ENCODE measurements at regions of chr12 and their contacts with region 1.

Region 1: DNA sequence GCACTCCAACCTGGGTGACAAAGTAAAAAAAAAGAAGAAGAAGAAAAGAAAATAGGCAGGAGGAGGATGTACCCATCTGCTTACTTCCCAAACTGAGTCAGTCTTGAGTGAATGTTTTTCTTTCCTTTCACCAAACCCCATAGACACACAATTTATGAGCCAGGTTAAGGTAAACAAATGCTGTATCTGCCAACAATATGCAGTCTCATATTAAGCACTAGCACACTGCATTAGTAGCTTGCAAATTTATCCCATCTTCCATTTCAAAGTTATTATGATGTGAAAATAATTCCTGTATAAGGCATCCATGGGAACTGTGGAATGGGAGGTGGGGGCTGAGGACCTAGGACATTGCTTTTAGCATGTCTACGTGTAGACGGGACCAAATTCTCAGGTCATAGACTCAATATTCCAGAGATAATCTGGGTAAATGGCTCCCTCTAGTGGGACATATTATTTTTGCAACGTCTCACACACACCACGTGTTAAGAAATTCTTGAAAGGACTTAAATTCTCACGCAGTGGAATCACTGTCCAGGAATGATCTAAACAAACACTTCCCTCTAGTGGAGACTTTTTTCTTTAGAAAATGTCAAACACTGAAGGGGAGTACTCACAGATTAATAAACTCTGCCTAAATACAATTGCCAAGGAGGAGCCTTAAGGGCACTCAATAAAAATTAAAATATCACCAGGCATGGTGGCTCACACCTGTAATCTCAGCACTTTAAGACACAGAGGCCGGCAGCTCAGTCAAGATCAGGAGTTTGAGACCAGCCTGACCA is 17.1 kb upstream of the OR10P1 start:
- DNase-seq: peak; percentile 90
- H3K4me3 Mint-ChIP-seq: no peak overlapping the region
- H3K27ac Mint-ChIP-seq: no peak overlapping the region
- H3K4me1 Mint-ChIP-seq: no peaks in the 10 kb centered on the region
- H3K27me3 Mint-ChIP-seq: peaks cover 38% of the 10 kb centered on the region

Region 2: GRCh38 chr12:54749191-54749818 is 870.2 kb before region 1 on chr12:
- intact Hi-C with region 1: no loop called
- DNase-seq: peak; percentile 84
- H3K4me3 Mint-ChIP-seq: peak overlapping the region; percentile 41
- H3K27ac Mint-ChIP-seq: no peak overlapping the region
- H3K4me1 Mint-ChIP-seq: peaks cover 16% of the 10 kb centered on the region
- H3K27me3 Mint-ChIP-seq: peaks cover 20% of the 10 kb centered on the region

Region 3: GRCh38 chr12:54853995-54854566 is 765.5 kb before region 1 on chr12 and contains the start of gene MUCL1:
- intact Hi-C with region 1: loop called (anchors 10 kb)
- DNase-seq: peak; percentile 93
- H3K4me3 Mint-ChIP-seq: no peak within 1 kb of the TSS
- H3K27ac Mint-ChIP-seq: no peak within 1 kb of the TSS
- H3K4me1 Mint-ChIP-seq: peaks cover 20% of the 10 kb centered on the region
- H3K27me3 Mint-ChIP-seq: peaks cover 5% of the 10 kb centered on the region
- total RNA-seq, gene MUCL1: 0.54 and 0.84 TPM in 2 replicates

Region 4: DNA sequence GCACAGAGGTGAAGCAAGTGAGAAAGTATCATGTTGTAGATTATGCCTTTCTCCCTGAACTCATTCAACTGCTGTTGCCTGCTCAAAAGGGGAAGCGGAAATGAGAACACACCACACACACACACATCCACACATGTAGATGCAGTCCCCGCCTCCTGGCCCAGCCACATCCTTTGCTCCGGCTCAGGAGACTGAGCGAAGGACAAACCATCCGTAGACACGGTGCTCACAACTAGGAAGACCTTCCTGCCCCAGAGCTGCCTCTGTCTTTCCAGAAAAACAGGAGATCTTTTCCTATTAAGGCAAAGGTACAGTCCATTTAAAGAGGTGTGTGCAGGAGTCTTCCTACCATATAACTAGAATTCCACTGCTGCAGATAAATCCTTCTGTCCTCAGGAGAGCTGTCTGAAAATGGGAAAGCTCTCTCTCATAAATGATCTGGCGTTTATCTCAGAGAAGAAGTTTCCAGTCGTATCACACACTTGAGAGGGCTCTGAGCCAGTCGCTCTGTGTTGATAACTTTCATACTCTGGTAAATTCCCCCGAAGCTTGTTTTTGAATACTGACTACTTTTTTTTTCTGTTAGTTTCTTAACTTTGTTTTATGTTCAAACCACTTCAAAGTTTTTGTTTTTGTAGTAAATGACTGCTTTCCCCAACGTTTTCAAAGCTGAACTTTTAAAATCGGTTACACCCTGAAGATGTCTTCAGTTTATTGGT is 634.7 kb before region 1 on chr12 and contains the start of gene TESPA1:
- intact Hi-C with region 1: loop called (anchors 10 kb)
- DNase-seq: peak; percentile 95
- H3K4me3 Mint-ChIP-seq: peak within 1 kb of the TSS; percentile 86
- H3K27ac Mint-ChIP-seq: peak within 1 kb of the TSS; percentile 97
- H3K4me1 Mint-ChIP-seq: peaks cover 61% of the 10 kb centered on the region
- H3K27me3 Mint-ChIP-seq: no peaks in the 10 kb centered on the region
- total RNA-seq, gene TESPA1: 164 and 168 TPM in 2 replicates

Region 5: GRCh38 chr12:55188974-55189556 is 430.5 kb before region 1 on chr12:
- intact Hi-C with region 1: loop called (anchors 1 kb)
- DNase-seq: peak; percentile 88
- H3K4me3 Mint-ChIP-seq: no peak overlapping the region
- H3K27ac Mint-ChIP-seq: no peak overlapping the region
- H3K4me1 Mint-ChIP-seq: no peaks in the 10 kb centered on the region
- H3K27me3 Mint-ChIP-seq: peaks cover 19% of the 10 kb centered on the region

Region 6: GRCh38 chr12:55548756-55549155 is 70.8 kb before region 1 on chr12:
- intact Hi-C with region 1: no loop called
- DNase-seq: no peak
- H3K4me3 Mint-ChIP-seq: no peak overlapping the region
- H3K27ac Mint-ChIP-seq: no peak overlapping the region
- H3K4me1 Mint-ChIP-seq: no peaks in the 10 kb centered on the region
- H3K27me3 Mint-ChIP-seq: peaks cover 4% of the 10 kb centered on the region

Region 7: GRCh38 chr12:55659486-55660385 is 40.2 kb after region 1 on chr12:
- intact Hi-C with region 1: loop called (anchors 2 kb)
- DNase-seq: no peak
- H3K4me3 Mint-ChIP-seq: no peak overlapping the region
- H3K27ac Mint-ChIP-seq: no peak overlapping the region
- H3K4me1 Mint-ChIP-seq: no peaks in the 10 kb centered on the region
- H3K27me3 Mint-ChIP-seq: peaks cover 25% of the 10 kb centered on the region